Ascending aorta (tissue), 2 donors: ENCODE measurements at regions of chr18 and their contacts with region 1.

Region 1: GRCh38 chr18:57803103-57803969 is at the start of gene ATP8B1:
- DNase-seq: peak in 1 of 2 donors; percentile 92
- H3K4me3 ChIP-seq: peak within 1 kb of the TSS; percentile 99
- H3K27ac ChIP-seq: peak within 1 kb of the TSS; percentile 97
- H3K4me1 ChIP-seq: peaks cover 5 to 41% of the 10 kb centered on the region in 2 donors
- H3K27me3 ChIP-seq: no peaks in the 10 kb centered on the region
- CTCF ChIP-seq: no peak
- total RNA-seq, gene ATP8B1: 30.9 TPM

Region 2: DNA sequence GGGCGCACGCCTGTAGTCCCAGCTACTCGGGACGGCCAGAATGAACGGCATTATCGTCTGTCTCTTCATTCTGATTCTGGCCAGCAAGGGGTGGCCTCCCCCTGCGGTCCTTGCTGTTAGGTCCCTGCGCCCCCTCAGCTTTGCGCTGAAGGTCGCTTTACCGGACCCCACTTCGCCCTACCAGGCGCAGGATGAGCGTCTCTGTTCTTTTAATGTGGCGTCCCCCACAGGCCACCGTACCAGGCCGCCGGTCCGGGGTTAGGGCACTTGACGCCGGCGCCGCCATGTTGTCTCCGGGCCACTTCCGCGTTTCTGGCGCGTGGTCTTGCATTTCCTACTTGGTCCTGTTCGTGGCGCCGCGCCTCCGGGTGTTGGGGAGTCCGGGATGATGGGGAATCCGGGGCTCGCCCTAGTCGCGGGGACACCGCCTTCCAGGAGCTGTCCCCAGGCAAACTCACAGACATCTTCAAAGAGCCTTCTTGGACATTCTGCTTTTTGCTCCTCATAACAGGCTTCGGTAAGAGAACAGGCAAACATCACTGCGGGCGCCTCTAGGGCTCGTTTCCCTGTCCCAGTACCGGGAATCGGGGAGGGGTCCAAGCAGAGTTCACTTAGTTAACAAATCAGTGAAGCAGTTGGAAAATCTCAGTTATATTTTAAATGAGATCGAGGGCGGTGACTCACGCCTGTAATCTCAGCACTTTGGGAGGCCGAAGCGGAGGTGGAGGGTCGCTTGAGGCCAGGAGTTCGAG is 173.2 kb before region 1 on chr18:
- intact Hi-C with region 1: loop called (anchors 2 kb)
- DNase-seq: peak; percentile 90 to 98
- H3K4me3 ChIP-seq: peak overlapping the region; percentile 67 to 90
- H3K27ac ChIP-seq: peak overlapping the region; percentile 58 to 71
- H3K4me1 ChIP-seq: no peaks in the 10 kb centered on the region
- H3K27me3 ChIP-seq: no peaks in the 10 kb centered on the region
- CTCF ChIP-seq: peak; percentile 73 to 88 (median 86)

Region 3: GRCh38 chr18:57743008-57743407 is 60.3 kb before region 1 on chr18:
- intact Hi-C with region 1: loop called (anchors 2 kb)
- DNase-seq: peak in 1 of 2 donors; percentile 85
- H3K4me3 ChIP-seq: no peak overlapping the region
- H3K27ac ChIP-seq: peak overlapping the region; percentile 85 to 88
- H3K4me1 ChIP-seq: peaks cover 0 to 33% of the 10 kb centered on the region in 2 donors
- H3K27me3 ChIP-seq: no peaks in the 10 kb centered on the region
- CTCF ChIP-seq: no peak

Region 4: DNA sequence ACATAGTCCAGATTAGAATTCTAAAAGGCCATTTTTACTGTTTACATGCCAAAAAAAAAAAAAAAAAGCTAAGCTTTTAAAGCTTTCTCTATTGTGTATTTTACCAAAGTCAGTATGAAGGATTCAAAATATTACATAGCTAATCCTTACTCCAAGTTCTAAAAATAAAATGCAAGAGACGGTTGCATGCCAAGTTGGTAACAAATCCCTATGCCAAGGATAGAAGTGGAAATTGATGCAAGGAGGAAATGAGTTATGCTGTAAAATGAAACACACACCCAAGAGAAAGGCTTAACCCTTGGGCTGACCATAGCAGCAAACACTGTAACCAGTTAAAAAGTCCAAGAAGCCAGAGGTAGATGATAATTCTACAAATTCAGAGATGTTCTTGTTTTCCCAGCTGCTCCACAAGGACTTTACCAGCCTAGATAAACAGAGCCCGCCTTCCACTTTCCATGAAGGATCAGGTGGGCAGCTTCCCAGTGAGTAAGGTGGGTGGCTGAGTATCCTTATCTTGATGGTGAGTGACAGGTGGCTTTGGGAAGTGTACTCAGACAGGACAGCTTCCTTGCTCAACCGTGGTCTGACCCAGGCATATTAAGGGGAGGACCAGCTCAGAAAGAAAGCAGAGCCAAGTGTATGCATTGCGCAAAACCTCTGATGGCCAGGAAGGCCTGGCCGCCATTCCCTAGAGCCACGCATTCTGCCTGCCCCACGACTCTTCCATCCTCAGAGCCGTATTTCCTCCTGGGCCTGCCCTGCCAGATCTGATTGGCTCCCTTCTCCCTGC is 34.6 kb before region 1 on chr18:
- intact Hi-C with region 1: loop called (anchors 1 kb)
- DNase-seq: peak in 1 of 2 donors; percentile 64
- H3K4me3 ChIP-seq: peak overlapping the region in 1 of 2 donors; percentile 13
- H3K27ac ChIP-seq: peak overlapping the region; percentile 90 to 92
- H3K4me1 ChIP-seq: peaks cover 15 to 45% of the 10 kb centered on the region in 2 donors
- H3K27me3 ChIP-seq: no peaks in the 10 kb centered on the region
- CTCF ChIP-seq: no peak

Region 5: GRCh38 chr18:57789090-57789489 is 14.2 kb before region 1 on chr18:
- intact Hi-C with region 1: loop called (anchors 2 kb)
- DNase-seq: peak in 1 of 2 donors; percentile 60
- H3K4me3 ChIP-seq: peak overlapping the region in 1 of 2 donors; percentile 35
- H3K27ac ChIP-seq: peak overlapping the region; percentile 80
- H3K4me1 ChIP-seq: peaks cover 21 to 64% of the 10 kb centered on the region in 2 donors
- H3K27me3 ChIP-seq: no peaks in the 10 kb centered on the region
- CTCF ChIP-seq: no peak